ENCODE measurements at regions of chr22 and their contacts with region 1.

Region 1: DNA sequence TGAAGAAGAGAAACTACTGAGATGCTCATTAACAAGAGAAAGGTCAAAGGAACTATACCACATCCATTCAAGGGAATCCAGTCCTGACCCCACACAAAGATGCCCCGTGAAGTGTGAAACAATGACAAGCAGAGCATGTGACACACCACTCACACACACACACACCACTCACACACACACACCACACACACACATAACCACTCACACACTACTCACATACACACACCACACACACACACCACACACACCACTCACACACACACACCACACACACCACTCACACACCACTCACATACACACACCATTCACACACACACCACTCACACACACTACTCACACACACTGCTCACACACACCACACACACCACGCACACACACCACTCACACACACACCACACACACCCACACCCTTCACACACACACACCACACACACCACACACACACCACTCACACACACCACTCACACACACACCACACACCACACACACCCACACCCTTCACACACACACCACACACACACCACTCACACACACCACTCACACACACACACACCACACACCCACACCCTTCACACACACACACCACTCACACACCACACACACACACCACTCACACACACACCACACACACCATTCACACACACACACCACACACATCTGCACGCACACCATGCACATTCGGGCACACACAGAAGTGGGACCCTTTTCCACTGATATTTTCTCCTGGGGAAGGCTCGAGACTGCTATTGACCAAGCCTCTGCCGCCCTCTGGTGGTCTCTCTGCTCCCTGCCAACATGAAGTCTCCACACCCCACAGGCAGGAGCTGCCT is 32.0 kb upstream of the COMT start:
- DNase-seq: peak; percentile 60 to 68
- ATAC-seq: peak; percentile 92 to 99
- H3K4me3 ChIP-seq: no peak overlapping the region
- H3K27ac ChIP-seq: peak overlapping the region in 1 of 2 experiments; percentile 66; a peak in 3 of 6 replicates
- H3K4me1 ChIP-seq: no peaks in the 10 kb centered on the region
- CTCF ChIP-seq: peak; percentile 75
- EP300 ChIP-seq: no peak
- POLR2A ChIP-seq: no peak
- RAD21 ChIP-seq: peak; percentile 92 to 94

Region 2: DNA sequence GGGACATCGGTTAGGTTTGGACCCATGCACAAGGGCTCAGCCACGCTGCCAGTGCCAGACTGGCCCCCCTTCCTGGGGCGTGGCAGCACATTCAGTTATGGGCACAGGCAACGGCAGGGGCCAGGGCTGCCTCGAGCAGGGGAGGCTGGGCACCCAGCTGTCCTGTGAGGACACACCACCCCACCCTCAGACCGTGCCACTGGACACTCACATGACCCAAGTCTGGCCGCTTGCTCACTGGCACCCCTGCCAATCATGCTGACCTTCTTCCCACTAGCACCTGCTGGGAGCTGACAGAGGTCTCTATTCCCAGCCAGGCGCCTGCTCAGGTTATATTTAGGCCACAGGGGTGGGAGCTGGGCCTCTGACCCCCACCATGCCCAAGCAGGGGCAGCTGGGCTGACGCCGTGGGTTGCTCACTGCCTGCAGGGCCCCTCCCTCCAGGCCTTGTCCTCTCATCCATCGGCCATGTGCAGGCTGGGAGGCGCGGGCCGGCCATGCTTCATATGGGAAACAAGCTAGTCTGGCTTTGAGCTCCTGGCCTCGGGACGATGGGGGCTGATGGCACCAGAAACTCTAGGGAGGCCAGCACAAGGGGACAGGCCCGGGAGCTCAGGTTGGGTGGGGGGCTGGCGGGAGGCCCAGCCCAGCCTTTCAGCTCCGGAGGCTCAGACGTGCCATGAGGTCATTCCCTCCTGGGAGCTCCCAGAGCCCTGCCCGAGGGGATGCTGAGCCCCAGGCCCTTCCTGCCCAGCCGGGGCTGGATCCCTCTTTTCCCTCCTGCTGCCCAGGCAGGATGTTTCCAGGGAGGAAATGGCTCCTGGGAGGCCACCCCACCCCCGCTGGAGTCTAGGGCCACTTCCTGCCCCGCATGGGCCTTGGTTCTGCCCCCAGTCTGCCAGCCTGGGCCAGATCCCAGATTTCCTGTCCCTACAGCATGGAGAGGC is 164.1 kb before region 1 on chr22:
- CTCF ChIA-PET with region 1: interaction called, 11 read pairs
- POLR2A ChIA-PET with region 1: no interaction called
- DNase-seq: no peak
- ATAC-seq: no peak
- H3K4me3 ChIP-seq: no peak overlapping the region
- H3K27ac ChIP-seq: peak overlapping the region in 1 of 2 experiments; percentile 38; a peak in 1 of 6 replicates
- H3K4me1 ChIP-seq: peaks cover 6% of the 10 kb centered on the region; the same call in 2 of the 3 replicates
- CTCF ChIP-seq: no peak
- EP300 ChIP-seq: no peak
- POLR2A ChIP-seq: no peak
- RAD21 ChIP-seq: no peak

Region 3: GRCh38 chr22:19756288-19757128 is 153.1 kb before region 1 on chr22:
- CTCF ChIA-PET with region 1: interaction called, 62 read pairs
- POLR2A ChIA-PET with region 1: no interaction called
- DNase-seq: peak; percentile 54 to 72
- ATAC-seq: peak; percentile 72 to 81
- H3K4me3 ChIP-seq: peak overlapping the region; percentile 42
- H3K27ac ChIP-seq: peak overlapping the region; percentile 63 to 85; a peak in 5 of 6 replicates
- H3K4me1 ChIP-seq: peaks cover 6% of the 10 kb centered on the region
- CTCF ChIP-seq: peak; percentile 37
- EP300 ChIP-seq: no peak
- POLR2A ChIP-seq: no peak
- RAD21 ChIP-seq: peak; percentile 47 to 58

Region 4: DNA sequence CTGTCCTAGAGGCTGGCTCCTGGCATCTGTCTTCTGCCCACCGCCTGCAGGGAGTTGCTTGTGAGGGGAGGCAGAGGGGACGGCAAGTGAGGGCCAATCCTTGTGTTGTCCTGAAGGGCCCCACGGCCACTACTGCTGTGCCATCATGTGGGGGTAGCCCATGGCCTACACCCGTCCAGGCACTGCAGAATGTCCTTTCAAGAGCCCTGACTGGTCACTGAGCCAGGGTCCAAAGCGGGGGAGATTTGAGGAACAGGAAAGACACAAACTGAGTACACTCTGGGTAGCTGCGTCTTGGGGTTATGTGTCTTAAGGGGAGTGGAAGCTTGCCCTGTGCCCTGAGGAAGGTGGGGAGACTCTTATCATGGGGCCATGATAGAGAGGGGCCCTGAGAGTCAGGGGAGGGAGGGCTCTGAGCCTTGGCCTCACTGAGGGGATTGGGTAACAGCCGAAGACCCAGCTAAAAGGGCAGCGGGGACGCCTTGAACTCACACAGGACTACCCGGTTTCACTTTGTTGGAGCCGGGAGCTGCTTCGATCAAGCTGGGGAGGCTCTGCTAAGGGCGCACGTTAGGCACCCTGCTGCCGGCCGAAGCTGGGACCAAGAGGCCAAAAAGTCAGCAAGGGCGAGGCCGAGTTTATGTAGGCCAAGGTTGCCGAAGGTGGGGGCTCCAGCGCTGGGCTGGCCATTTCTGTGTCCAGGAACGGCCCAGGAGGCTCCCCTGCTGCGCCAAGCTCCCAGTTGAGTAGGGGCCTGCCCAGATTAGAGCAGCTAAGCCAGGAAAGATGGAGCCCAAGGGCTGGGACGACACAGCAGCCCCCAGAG is 147.0 kb before region 1 on chr22:
- CTCF ChIA-PET with region 1: interaction called, 62 read pairs
- POLR2A ChIA-PET with region 1: no interaction called
- DNase-seq: no peak
- ATAC-seq: no peak; a peak in 2 of 6 replicates
- H3K4me3 ChIP-seq: no peak overlapping the region
- H3K27ac ChIP-seq: no peak overlapping the region
- H3K4me1 ChIP-seq: no peaks in the 10 kb centered on the region; the same call in 2 of the 3 replicates
- CTCF ChIP-seq: no peak
- EP300 ChIP-seq: no peak
- POLR2A ChIP-seq: no peak
- RAD21 ChIP-seq: no peak

Region 5: GRCh38 chr22:19825904-19826618 is 83.5 kb before region 1 on chr22:
- CTCF ChIA-PET with region 1: no interaction called
- POLR2A ChIA-PET with region 1: no interaction called
- DNase-seq: no peak
- ATAC-seq: no peak
- H3K4me3 ChIP-seq: no peak overlapping the region
- H3K27ac ChIP-seq: no peak overlapping the region
- H3K4me1 ChIP-seq: peaks cover 5% of the 10 kb centered on the region; the same call in 1 of the 3 replicates
- CTCF ChIP-seq: no peak
- EP300 ChIP-seq: no peak
- POLR2A ChIP-seq: no peak
- RAD21 ChIP-seq: no peak

Measured in A549 (cell line).